Naive thymus-derived CD4-positive, alpha-beta T cell (primary cell): ENCODE measurements at regions of chr17 and their contacts with region 1.

Region 1: GRCh38 chr17:50626037-50626574 is 8.6 kb upstream of the ABCC3 start:
- DNase-seq: peak; percentile 37 to 63 (median 54)
- ATAC-seq: peak; percentile 64
- H3K4me3 ChIP-seq: no peak overlapping the region
- H3K4me3 Mint-ChIP-seq: no peak overlapping the region
- H3K27ac ChIP-seq: no peak overlapping the region
- H3K27ac Mint-ChIP-seq: no peak overlapping the region
- H3K4me1 ChIP-seq: no peaks in the 10 kb centered on the region
- H3K4me1 Mint-ChIP-seq: peaks cover 0 to 7% (median 0%) of the 10 kb centered on the region in 7 donors
- H3K27me3 ChIP-seq: peaks cover 0 to 10% of the 10 kb centered on the region in 2 donors
- H3K27me3 Mint-ChIP-seq: peaks cover 27 to 54% (median 39%) of the 10 kb centered on the region in 5 donors

Region 2: GRCh38 chr17:50372758-50373556 is 253.1 kb before region 1 on chr17 and contains the starts of genes EME1 and MRPL27:
- CTCF ChIA-PET with region 1: no interaction called
- POLR2A ChIA-PET with region 1: no interaction called
- intact Hi-C with region 1: no loop called
- DNase-seq: peak; percentile 81 to 95 (median 92)
- ATAC-seq: peak; percentile 94
- H3K4me3 ChIP-seq: peak within 1 kb of the TSS; percentile 99
- H3K4me3 Mint-ChIP-seq: peak within 1 kb of the TSS; percentile 92 to 100 (median 98)
- H3K27ac ChIP-seq: peak within 1 kb of the TSS; percentile 99
- H3K27ac Mint-ChIP-seq: peak within 1 kb of the TSS; percentile 97 to 100 (median 99)
- H3K4me1 ChIP-seq: peaks cover 9 to 13% of the 10 kb centered on the region in 2 donors
- H3K4me1 Mint-ChIP-seq: peaks cover 18 to 41% (median 31%) of the 10 kb centered on the region in 7 donors
- H3K27me3 ChIP-seq: no peaks in the 10 kb centered on the region
- H3K27me3 Mint-ChIP-seq: no peaks in the 10 kb centered on the region
- total RNA-seq, gene EME1: 0.61 to 17.5 (median 2.2) TPM
- total RNA-seq, gene MRPL27: 29.5 to 64.7 (median 32.0) TPM

Region 3: GRCh38 chr17:50689251-50689650 is 63.1 kb after region 1 on chr17:
- CTCF ChIA-PET with region 1: no interaction called
- POLR2A ChIA-PET with region 1: no interaction called
- intact Hi-C with region 1: loop called in 1 of 2 experiments (anchors 2 kb)
- DNase-seq: no peak
- ATAC-seq: no peak
- H3K4me3 ChIP-seq: no peak overlapping the region
- H3K4me3 Mint-ChIP-seq: no peak overlapping the region
- H3K27ac ChIP-seq: no peak overlapping the region
- H3K27ac Mint-ChIP-seq: no peak overlapping the region
- H3K4me1 ChIP-seq: no peaks in the 10 kb centered on the region
- H3K4me1 Mint-ChIP-seq: peaks cover 0 to 4% (median 0%) of the 10 kb centered on the region in 7 donors
- H3K27me3 ChIP-seq: no peaks in the 10 kb centered on the region
- H3K27me3 Mint-ChIP-seq: peaks cover 0 to 8% (median 0%) of the 10 kb centered on the region in 5 donors

Region 4: DNA sequence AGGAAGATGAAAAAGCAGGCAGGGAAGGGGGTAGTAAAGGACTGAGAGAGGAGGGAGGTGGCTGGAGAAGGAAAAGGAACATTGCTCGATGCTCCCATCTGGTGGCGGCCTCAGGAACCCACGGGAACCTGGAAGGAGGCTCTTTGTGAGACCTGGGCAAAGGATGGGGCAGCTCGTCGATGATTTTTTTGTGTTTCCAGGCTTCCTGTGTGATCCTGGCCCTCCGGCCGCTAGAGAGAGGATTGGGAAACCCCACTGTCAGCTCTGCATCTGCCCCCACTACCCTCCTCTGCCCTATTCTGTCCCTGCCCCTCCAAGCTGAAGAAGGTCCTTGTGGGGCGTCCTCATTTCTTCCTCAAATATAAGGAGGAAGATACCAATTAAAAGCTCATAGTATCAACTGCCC is 215.8 kb after region 1 on chr17:
- CTCF ChIA-PET with region 1: interaction called, 5 read pairs
- POLR2A ChIA-PET with region 1: no interaction called
- intact Hi-C with region 1: loop called in 1 of 2 experiments (anchors 1 kb)
- DNase-seq: peak in 6 of 9 donors; percentile 34 to 58 (median 50)
- ATAC-seq: peak; percentile 67
- H3K4me3 ChIP-seq: no peak overlapping the region
- H3K4me3 Mint-ChIP-seq: no peak overlapping the region
- H3K27ac ChIP-seq: no peak overlapping the region
- H3K27ac Mint-ChIP-seq: no peak overlapping the region
- H3K4me1 ChIP-seq: no peaks in the 10 kb centered on the region
- H3K4me1 Mint-ChIP-seq: peaks cover 0 to 4% (median 0%) of the 10 kb centered on the region in 7 donors
- H3K27me3 ChIP-seq: no peaks in the 10 kb centered on the region
- H3K27me3 Mint-ChIP-seq: peaks cover 0 to 2% (median 0%) of the 10 kb centered on the region in 5 donors

Region 5: GRCh38 chr17:50956750-50957523 is 330.8 kb after region 1 on chr17:
- CTCF ChIA-PET with region 1: no interaction called
- POLR2A ChIA-PET with region 1: no interaction called
- intact Hi-C with region 1: loop called in 1 of 2 experiments (anchors 5 kb)
- DNase-seq: peak; percentile 39 to 72 (median 58)
- ATAC-seq: peak; percentile 92
- H3K4me3 ChIP-seq: no peak overlapping the region
- H3K4me3 Mint-ChIP-seq: peak overlapping the region in 1 of 10 donors; percentile 68
- H3K27ac ChIP-seq: no peak overlapping the region
- H3K27ac Mint-ChIP-seq: peak overlapping the region in 4 of 9 donors; percentile 17 to 62 (median 50)
- H3K4me1 ChIP-seq: peaks cover 0 to 7% of the 10 kb centered on the region in 2 donors
- H3K4me1 Mint-ChIP-seq: peaks cover 0 to 8% (median 4%) of the 10 kb centered on the region in 7 donors
- H3K27me3 ChIP-seq: no peaks in the 10 kb centered on the region
- H3K27me3 Mint-ChIP-seq: no peaks in the 10 kb centered on the region

Region 6: DNA sequence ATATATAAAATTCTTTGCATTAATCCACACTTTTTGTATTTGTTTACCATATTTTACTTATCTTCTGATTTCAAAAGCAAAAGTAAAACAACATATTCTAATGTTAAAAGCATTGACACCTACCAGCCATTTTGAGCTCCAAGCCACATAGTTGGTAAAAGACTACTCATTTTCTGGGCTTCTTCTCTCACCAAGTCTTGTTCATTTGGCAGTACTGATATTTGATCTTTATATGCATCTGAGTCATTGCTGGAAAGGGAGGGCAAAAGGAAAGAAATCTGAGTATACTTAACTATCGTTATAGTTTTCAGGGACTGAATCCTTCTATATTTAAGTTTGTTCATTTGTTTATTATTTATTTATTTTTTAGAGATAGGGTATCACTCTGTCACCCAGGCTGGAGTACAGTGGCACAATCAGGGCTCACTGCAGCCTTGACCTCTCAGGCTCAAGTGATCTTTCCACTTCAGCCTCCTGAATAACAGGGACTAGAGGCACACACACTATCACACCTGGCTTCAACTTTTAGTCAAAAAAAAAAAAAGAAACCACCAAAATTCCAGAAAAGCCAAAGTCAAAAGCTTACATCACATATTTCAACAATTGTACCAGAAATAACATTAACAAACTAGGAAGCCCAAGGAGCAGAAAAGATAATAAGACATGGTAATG is 361.0 kb after region 1 on chr17:
- CTCF ChIA-PET with region 1: no interaction called
- POLR2A ChIA-PET with region 1: no interaction called
- intact Hi-C with region 1: no loop called
- DNase-seq: no peak
- ATAC-seq: no peak
- H3K4me3 ChIP-seq: no peak overlapping the region
- H3K4me3 Mint-ChIP-seq: no peak overlapping the region
- H3K27ac ChIP-seq: no peak overlapping the region
- H3K27ac Mint-ChIP-seq: peak overlapping the region in 2 of 9 donors; percentile 56 to 72
- H3K4me1 ChIP-seq: no peaks in the 10 kb centered on the region
- H3K4me1 Mint-ChIP-seq: peaks cover 0 to 2% (median 0%) of the 10 kb centered on the region in 7 donors
- H3K27me3 ChIP-seq: no peaks in the 10 kb centered on the region
- H3K27me3 Mint-ChIP-seq: no peaks in the 10 kb centered on the region